ENCODE measurements at regions of chr6 and their contacts with region 1.

Region 1: GRCh38 chr6:30541515-30542403 is 14.5 kb downstream of the GNL1 start:
- DNase-seq: peak; percentile 80
- ATAC-seq: peak; percentile 85
- H3K4me3 Mint-ChIP-seq: peak overlapping the region; percentile 74
- H3K27ac Mint-ChIP-seq: no peak overlapping the region
- H3K4me1 Mint-ChIP-seq: peaks cover 10% of the 10 kb centered on the region
- H3K27me3 Mint-ChIP-seq: no peaks in the 10 kb centered on the region; the same call in 1 of the 2 replicates
- CTCF ChIP-seq: peak; percentile 97

Region 2: GRCh38 chr6:30463651-30464618 is 77.8 kb before region 1 on chr6:
- CTCF ChIA-PET with region 1: interaction called, 10 read pairs
- POLR2A ChIA-PET with region 1: no interaction called
- DNase-seq: peak; percentile 38
- ATAC-seq: peak; percentile 15; the same call in 1 of the 2 replicates
- H3K4me3 Mint-ChIP-seq: no peak overlapping the region
- H3K27ac Mint-ChIP-seq: no peak overlapping the region
- H3K4me1 Mint-ChIP-seq: peaks cover 6% of the 10 kb centered on the region; the same call in 1 of the 2 replicates
- H3K27me3 Mint-ChIP-seq: peaks cover 97% of the 10 kb centered on the region
- CTCF ChIP-seq: no peak

Region 3: DNA sequence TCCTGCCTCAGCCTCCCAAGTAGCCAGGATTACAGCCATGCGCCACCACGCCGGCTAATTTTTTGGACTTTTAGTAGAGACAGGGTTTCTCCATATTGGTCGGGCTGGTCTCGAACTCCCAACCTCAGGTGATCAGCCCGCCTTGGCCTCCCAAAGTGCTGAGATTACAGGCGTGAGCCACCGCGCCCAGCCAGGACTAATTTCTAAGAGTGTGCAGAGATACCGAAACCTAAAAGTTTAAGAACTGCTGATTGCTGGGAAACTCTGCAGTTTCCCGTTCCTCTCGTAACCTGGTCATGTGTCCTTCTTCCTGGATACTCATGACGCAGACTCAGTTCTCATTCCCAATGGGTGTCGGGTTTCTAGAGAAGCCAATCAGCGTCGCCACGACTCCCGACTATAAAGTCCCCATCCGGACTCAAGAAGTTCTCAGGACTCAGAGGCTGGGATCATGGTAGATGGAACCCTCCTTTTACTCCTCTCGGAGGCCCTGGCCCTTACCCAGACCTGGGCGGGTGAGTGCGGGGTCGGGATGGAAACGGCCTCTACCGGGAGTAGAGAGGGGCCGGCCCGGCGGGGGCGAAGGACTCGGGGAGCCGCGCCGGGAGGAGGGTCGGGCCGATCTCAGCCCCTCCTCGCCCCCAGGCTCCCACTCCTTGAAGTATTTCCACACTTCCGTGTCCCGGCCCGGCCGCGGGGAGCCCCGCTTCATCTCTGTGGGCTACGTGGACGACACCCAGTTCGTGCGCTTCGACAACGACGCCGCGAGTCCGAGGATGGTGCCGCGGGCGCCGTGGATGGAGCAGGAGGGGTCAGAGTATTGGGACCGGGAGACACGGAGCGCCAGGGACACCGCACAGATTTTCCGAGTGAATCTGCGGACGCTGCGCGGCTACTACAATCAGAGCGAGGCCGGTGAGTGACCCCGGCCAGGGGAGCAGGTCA is 52.4 kb before region 1 on chr6 and contains the start of gene HLA-E:
- CTCF ChIA-PET with region 1: interaction called, 212 read pairs
- POLR2A ChIA-PET with region 1: interaction called, 3 read pairs
- DNase-seq: peak; percentile 85
- ATAC-seq: peak; percentile 89
- H3K4me3 Mint-ChIP-seq: peak within 1 kb of the TSS; percentile 86
- H3K27ac Mint-ChIP-seq: peak within 1 kb of the TSS; percentile 98
- H3K4me1 Mint-ChIP-seq: peaks cover 8% of the 10 kb centered on the region
- H3K27me3 Mint-ChIP-seq: peaks cover 5% of the 10 kb centered on the region
- CTCF ChIP-seq: no peak
- total RNA-seq, gene HLA-E: 44.6 to 49.0 TPM (median 44.7 TPM) in 3 replicates

Region 4: DNA sequence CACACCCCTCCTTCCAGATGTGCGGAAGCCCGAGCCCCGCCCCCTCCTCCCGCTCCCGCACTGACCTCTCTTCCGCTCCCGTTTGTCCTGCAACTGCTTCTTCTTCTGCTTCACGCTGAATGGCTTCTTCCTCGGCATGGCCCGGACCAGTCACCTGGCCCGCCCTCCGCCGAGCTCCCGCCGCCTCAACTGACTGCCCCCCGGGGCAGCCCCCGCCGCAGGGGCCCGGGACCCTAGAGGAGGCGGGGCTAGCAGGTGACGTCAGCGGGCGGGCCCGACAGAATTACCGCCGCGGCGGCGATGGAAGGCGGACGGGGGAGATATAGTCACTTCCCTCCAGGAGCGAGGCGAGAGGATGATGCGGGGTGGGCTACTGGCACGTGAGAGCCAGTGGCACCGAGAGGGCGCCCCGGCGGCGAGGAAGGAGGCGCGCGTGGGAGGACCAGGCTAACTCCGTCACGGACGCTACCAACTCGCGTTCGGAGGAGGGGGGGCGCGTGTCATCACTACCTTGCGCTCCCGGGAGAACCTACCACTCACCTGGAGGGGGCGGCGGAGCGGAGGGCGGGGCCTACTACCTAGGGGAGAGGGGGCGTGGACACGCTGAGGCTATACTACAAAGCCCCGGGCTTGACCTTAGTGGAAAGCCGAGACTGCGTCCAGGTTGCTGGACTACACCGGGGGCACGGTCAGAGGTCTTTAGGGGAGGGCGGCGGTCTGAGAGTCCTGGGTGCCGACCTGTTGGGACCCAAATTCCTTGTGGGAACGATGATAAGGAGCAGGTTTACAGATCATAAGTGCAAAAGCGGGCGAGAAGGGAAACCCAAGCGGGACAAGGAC is 14.5 kb after region 1 on chr6 and contains the start of gene GNL1:
- CTCF ChIA-PET with region 1: interaction called, 38 read pairs
- POLR2A ChIA-PET with region 1: no interaction called
- DNase-seq: peak; percentile 97
- ATAC-seq: peak; percentile 87
- H3K4me3 Mint-ChIP-seq: peak within 1 kb of the TSS; percentile 92
- H3K27ac Mint-ChIP-seq: peak within 1 kb of the TSS; percentile 99
- H3K4me1 Mint-ChIP-seq: peaks cover 20% of the 10 kb centered on the region
- H3K27me3 Mint-ChIP-seq: no peaks in the 10 kb centered on the region
- CTCF ChIP-seq: no peak
- total RNA-seq, gene GNL1: 69.1 to 85.7 TPM (median 72.8 TPM) in 3 replicates

Region 5: GRCh38 chr6:30590994-30591393 is 49.2 kb after region 1 on chr6:
- CTCF ChIA-PET with region 1: interaction called, 16 read pairs
- POLR2A ChIA-PET with region 1: no interaction called
- DNase-seq: no peak
- ATAC-seq: no peak
- H3K4me3 Mint-ChIP-seq: no peak overlapping the region
- H3K27ac Mint-ChIP-seq: no peak overlapping the region
- H3K4me1 Mint-ChIP-seq: no peaks in the 10 kb centered on the region
- H3K27me3 Mint-ChIP-seq: no peaks in the 10 kb centered on the region
- CTCF ChIP-seq: no peak

Region 6: DNA sequence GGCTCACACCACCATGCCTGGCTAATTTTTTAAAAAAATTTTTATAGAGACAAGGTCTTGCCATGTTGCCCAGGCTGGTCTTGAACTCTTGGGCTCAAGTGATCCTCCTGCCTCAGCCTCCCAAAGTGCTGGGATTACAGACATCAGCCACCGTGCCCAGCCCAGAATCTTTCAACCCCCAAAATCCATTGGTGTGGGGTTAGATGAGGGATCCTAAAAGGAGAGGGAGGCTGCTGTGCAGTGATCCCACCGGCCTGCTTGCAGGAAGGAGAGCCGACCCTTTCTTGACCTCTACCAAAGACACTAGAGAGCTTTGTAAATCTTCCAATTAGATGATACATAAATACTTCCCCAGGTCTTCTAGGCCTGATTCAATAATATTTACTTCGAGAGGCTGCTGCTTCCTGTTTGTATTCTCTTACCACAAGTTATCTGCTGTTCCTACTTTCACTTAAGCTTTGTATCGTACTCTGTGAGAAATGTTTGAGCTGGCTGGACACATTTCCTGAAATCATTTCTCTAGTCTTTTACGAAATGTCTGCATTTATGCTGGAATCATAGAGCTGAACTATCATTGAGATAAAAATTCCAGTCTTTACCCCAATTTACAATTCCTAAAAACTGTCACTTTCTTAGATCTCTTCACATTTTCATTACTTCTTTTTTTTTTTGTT is 251.9 kb after region 1 on chr6:
- CTCF ChIA-PET with region 1: no interaction called
- POLR2A ChIA-PET with region 1: no interaction called
- DNase-seq: no peak
- ATAC-seq: no peak
- H3K4me3 Mint-ChIP-seq: no peak overlapping the region
- H3K27ac Mint-ChIP-seq: no peak overlapping the region
- H3K4me1 Mint-ChIP-seq: peaks cover 5% of the 10 kb centered on the region; the same call in 1 of the 2 replicates
- H3K27me3 Mint-ChIP-seq: peaks cover 34% of the 10 kb centered on the region
- CTCF ChIP-seq: no peak